PC-3 (cell line): ENCODE measurements at regions of chrX and their contacts with region 1.

Region 1: DNA sequence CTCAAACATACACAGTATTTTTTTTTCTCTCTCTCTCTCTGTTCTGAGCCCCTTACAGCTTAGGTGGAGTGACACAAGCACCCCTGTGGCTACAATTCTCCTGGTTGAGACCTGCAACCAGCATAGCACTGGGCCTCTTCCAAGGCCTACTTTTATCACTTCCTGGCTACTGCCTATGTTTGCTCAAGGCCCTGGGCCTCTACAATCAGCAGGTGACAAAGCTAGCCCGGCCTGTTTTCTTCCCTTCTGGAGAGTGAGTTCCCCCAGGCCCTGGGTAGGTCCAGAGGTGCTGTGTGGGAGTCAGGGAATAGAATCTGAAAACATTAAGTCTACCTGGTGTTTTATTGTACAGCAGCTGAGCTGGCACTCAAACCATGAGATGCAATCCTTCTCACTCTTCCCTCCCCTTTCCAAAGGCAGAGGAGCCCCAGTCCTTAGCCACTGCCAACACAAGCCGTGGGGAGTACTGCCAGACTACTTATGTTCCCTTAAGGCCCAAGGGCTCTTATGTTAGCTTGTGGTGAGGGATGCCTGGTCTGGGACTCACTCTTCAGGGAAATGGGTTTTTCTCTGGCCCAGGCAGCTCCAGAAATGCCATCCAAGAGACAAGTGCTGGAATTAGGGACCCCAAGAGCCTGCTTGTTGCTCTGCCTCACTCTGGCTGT is 23.8 kb upstream of the MAGEC3 start:
- DNase-seq: peak; percentile 70
- ATAC-seq: peak; percentile 85
- H3K4me3 ChIP-seq: no peak overlapping the region
- H3K27ac ChIP-seq: no peak overlapping the region
- H3K4me1 ChIP-seq: peaks cover 10% of the 10 kb centered on the region
- H3K27me3 ChIP-seq: no peaks in the 10 kb centered on the region
- CTCF ChIP-seq: no peak

Region 2: GRCh38 chrX:141760761-141761160 is 53.6 kb before region 1 on chrX:
- CTCF ChIA-PET with region 1: no interaction called
- POLR2A ChIA-PET with region 1: no interaction called
- intact Hi-C with region 1: loop called (anchors 5 kb)
- DNase-seq: peak; percentile 86
- ATAC-seq: peak; percentile 87
- H3K4me3 ChIP-seq: no peak overlapping the region
- H3K27ac ChIP-seq: peak overlapping the region; percentile 47
- H3K4me1 ChIP-seq: peaks cover 23% of the 10 kb centered on the region
- H3K27me3 ChIP-seq: no peaks in the 10 kb centered on the region
- CTCF ChIP-seq: no peak

Region 3: DNA sequence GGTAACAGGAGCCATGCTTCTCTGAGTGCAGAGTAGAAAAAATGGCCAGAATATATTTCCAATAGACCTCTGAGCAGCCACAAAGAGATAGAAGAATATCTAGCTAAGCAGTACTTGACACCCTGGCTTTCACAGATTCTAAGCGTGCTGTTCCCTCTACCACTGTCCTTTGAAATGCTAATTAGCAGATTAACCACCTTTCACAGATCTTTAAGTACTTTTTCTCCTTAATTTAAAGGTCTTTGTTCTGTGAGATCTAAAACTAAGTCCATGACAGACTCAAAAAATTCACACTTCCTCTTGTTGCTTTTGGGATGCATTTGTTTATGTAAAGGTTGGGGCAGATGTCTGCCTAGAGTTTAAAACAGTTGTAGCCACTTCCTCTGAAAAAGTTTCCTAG is 419.1 kb after region 1 on chrX:
- CTCF ChIA-PET with region 1: no interaction called
- POLR2A ChIA-PET with region 1: no interaction called
- intact Hi-C with region 1: no loop called
- DNase-seq: no peak
- ATAC-seq: no peak
- H3K4me3 ChIP-seq: no peak overlapping the region
- H3K27ac ChIP-seq: no peak overlapping the region
- H3K4me1 ChIP-seq: no peaks in the 10 kb centered on the region
- H3K27me3 ChIP-seq: no peaks in the 10 kb centered on the region
- CTCF ChIP-seq: no peak